Aorta (tissue), 5 donors: ENCODE measurements at regions of chr12 and their contacts with region 1.

Region 1: GRCh38 chr12:110937104-110937641 is 16.8 kb upstream of the MYL2 start:
- DNase-seq: peak; percentile 66 to 88
- ATAC-seq: peak; percentile 70
- H3K4me3 ChIP-seq: no peak overlapping the region
- H3K27ac ChIP-seq: no peak overlapping the region
- H3K4me1 ChIP-seq: no peaks in the 10 kb centered on the region
- H3K27me3 ChIP-seq: no peaks in the 10 kb centered on the region

Region 2: DNA sequence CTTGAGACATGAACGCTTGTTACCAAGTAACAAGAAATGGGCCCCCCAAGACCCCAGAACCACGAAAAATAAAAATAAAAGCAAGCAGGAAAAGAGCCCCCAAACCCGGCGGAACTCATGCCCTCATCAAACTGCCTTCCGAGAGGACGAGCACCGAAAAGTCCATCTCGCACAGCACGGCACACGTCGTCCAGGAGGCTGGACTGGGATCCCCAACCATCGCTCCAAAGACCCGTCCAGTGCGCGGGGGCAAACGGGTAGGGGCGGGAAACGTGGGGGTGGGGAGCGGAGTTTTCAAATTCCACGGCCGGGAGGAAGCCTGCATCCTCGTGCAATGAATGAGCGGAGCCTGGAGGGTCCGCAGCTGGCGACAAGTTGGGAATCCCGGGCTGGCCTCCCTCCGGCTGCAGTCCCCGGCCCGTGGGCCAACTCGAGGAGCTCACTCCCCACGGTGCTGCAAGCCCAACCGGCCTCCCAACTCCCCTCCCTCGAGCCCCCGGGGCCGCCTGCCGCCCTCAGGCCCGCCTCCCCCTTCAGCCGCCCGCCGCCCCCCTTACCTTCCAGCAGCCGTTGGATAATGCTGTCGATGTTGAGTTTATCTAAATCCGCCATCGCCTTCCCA is 195.0 kb before region 1 on chr12:
- intact Hi-C with region 1: no loop called
- DNase-seq: peak in 1 of 2 donors; percentile 67
- ATAC-seq: peak; percentile 52
- H3K4me3 ChIP-seq: peak overlapping the region; percentile 61 to 83
- H3K27ac ChIP-seq: peak overlapping the region in 1 of 2 donors; percentile 72
- H3K4me1 ChIP-seq: peaks cover 0 to 2% of the 10 kb centered on the region in 2 donors
- H3K27me3 ChIP-seq: no peaks in the 10 kb centered on the region

Region 3: GRCh38 chr12:110896559-110896958 is 40.6 kb before region 1 on chr12:
- intact Hi-C with region 1: no loop called
- DNase-seq: no peak
- ATAC-seq: no peak
- H3K4me3 ChIP-seq: no peak overlapping the region
- H3K27ac ChIP-seq: no peak overlapping the region
- H3K4me1 ChIP-seq: no peaks in the 10 kb centered on the region
- H3K27me3 ChIP-seq: no peaks in the 10 kb centered on the region

Region 4: GRCh38 chr12:111287125-111287900 is 350.1 kb after region 1 on chr12:
- intact Hi-C with region 1: loop called in 1 of 2 experiments (anchors 10 kb)
- DNase-seq: no peak
- ATAC-seq: no peak
- H3K4me3 ChIP-seq: no peak overlapping the region
- H3K27ac ChIP-seq: no peak overlapping the region
- H3K4me1 ChIP-seq: no peaks in the 10 kb centered on the region
- H3K27me3 ChIP-seq: no peaks in the 10 kb centered on the region

Region 5: DNA sequence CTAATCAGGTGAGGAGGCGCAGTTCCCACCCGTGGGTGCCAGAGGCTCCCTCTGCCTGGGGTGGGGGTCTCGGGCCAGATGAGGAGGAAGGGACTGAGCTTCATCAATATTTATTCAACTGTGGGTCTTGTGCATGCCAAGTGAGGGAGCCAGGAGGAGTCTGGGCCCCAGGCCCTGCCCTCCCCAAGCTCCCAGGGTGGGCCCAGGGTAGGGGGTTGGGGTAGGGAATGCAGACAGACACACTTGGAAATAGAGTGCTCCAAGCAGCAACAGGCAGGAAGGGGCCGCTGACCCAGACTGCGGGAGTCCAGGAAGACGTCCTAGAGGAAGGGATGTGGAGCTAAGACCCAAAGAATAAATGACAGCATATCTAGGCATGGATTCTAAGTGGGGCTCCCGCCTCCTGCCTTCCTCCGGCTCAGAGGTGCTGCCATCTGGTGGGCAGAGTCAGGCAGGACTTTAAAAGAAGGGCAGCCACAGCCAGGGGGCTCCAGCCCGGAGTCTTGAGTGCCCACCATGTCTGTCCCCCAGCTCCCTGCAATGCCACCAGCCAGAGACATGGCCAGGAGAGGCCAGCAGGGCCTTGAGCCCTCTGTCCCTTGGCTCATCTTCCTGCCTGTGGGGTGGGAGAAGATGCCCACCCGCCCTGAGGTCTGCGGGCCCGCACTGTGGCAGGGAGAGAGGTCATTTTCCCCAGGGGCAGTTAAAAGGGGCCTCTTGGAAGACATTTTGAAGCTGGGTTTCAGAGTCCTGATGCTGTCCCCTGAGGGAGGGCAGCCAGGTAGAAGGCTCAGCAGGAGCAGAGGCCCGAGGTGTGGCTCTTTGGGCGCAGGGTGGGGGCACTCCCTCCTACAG is 361.6 kb after region 1 on chr12:
- intact Hi-C with region 1: loop called in 1 of 2 experiments (anchors 5 kb)
- DNase-seq: no peak
- ATAC-seq: no peak
- H3K4me3 ChIP-seq: no peak overlapping the region
- H3K27ac ChIP-seq: no peak overlapping the region
- H3K4me1 ChIP-seq: no peaks in the 10 kb centered on the region
- H3K27me3 ChIP-seq: no peaks in the 10 kb centered on the region

Region 6: DNA sequence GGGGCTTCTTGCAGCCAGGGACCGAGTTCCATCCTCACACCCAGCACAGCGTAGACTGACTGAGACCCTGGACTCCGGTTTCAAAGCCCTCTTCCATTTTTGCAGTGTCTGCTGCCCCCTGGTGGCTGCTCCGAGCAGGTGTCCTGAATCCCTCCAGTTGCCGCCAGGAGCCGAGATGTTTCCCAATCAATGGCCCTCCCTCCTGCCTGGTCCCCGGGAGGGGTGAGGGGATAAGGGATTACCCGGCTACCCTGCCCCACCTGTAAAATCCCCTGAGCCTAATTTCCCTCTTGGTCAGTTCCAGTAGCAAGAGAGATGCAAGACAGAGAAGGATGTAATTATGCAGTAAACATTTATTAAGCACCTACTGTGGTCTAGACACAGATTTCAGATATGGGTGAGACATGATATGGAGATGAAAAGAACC is 376.7 kb after region 1 on chr12:
- intact Hi-C with region 1: loop called in 1 of 2 experiments (anchors 5 kb)
- DNase-seq: peak; percentile 83 to 91
- ATAC-seq: peak; percentile 72
- H3K4me3 ChIP-seq: no peak overlapping the region
- H3K27ac ChIP-seq: no peak overlapping the region
- H3K4me1 ChIP-seq: no peaks in the 10 kb centered on the region
- H3K27me3 ChIP-seq: no peaks in the 10 kb centered on the region

Region 7: DNA sequence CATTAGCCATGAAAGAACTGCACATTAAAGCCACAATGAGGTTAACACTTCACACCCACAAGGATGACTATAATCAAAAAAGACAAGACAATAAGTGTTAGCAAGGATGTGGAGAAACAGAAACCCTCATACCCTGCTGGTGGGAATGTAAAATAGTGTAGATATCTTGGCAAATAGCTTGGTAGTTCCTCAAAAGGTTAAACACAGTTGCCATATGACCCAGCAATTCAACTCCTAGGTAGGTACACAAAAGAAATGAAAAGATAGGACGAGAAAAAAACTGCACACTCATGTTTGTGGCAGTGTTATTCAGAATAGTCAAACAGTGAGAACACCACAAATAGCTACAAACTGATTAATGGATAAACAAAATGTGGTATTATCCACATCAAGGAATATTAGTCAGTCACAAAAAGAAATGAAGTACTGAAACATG is 568.4 kb after region 1 on chr12:
- intact Hi-C with region 1: no loop called
- DNase-seq: no peak
- ATAC-seq: no peak
- H3K4me3 ChIP-seq: no peak overlapping the region
- H3K27ac ChIP-seq: no peak overlapping the region
- H3K4me1 ChIP-seq: no peaks in the 10 kb centered on the region
- H3K27me3 ChIP-seq: no peaks in the 10 kb centered on the region